Esophagus muscularis mucosa (tissue), 4 donors: ENCODE measurements at regions of chr12 and their contacts with region 1.

Region 1: GRCh38 chr12:12376646-12377448 is 20.0 kb downstream of the BORCS5 start:
- DNase-seq: no peak
- H3K4me3 ChIP-seq: no peak overlapping the region
- H3K27ac ChIP-seq: no peak overlapping the region
- H3K4me1 ChIP-seq: peaks cover 0 to 12% (median 10%) of the 10 kb centered on the region in 4 donors
- H3K27me3 ChIP-seq: no peaks in the 10 kb centered on the region
- CTCF ChIP-seq: peak; percentile 70 to 75 (median 73)
- EP300 ChIP-seq: no peak
- POLR2A ChIP-seq: no peak

Region 2: DNA sequence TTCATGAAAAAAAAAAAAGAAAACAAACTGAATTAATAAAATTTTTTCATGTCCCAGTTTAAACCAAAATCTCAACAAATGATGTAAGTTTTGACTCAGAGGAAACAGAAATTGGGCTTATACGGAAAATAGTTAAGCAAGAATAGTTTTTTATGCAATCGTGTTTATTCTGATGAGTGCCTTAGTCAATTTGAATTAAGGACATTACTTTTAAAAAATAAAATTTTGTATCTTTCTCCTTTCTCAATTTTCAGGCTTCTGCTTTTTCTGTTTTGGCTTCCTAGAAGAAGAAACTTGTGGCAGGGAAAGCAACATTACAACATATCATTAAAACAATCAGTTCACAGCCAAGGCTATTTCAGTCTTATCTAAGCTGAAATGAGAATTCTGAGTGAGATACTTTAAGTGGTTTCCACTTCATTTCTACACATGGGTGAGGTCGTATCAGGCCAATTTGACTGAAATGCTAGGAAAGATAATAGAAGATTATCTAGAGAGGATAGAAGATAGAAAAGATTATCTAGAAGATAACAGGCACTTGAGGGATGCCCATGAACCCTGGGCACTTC is 253.7 kb before region 1 on chr12:
- intact Hi-C with region 1: no loop called
- DNase-seq: no peak
- H3K4me3 ChIP-seq: no peak overlapping the region
- H3K27ac ChIP-seq: peak overlapping the region in 2 of 4 donors; percentile 12 to 28
- H3K4me1 ChIP-seq: no peaks in the 10 kb centered on the region
- H3K27me3 ChIP-seq: no peaks in the 10 kb centered on the region
- CTCF ChIP-seq: no peak
- EP300 ChIP-seq: no peak
- POLR2A ChIP-seq: no peak

Region 3: GRCh38 chr12:12387501-12387900 is 10.7 kb after region 1 on chr12:
- intact Hi-C with region 1: loop called (anchors 1 kb)
- DNase-seq: peak; percentile 83
- H3K4me3 ChIP-seq: no peak overlapping the region
- H3K27ac ChIP-seq: no peak overlapping the region
- H3K4me1 ChIP-seq: peaks cover 0 to 9% (median 4%) of the 10 kb centered on the region in 4 donors
- H3K27me3 ChIP-seq: no peaks in the 10 kb centered on the region
- CTCF ChIP-seq: no peak
- EP300 ChIP-seq: no peak
- POLR2A ChIP-seq: no peak

Region 4: GRCh38 chr12:12449467-12450025 is 72.7 kb after region 1 on chr12:
- intact Hi-C with region 1: no loop called
- DNase-seq: no peak
- H3K4me3 ChIP-seq: no peak overlapping the region
- H3K27ac ChIP-seq: no peak overlapping the region
- H3K4me1 ChIP-seq: peaks cover 0 to 7% (median 4%) of the 10 kb centered on the region in 4 donors
- H3K27me3 ChIP-seq: no peaks in the 10 kb centered on the region
- CTCF ChIP-seq: no peak
- EP300 ChIP-seq: no peak
- POLR2A ChIP-seq: no peak

Region 5: DNA sequence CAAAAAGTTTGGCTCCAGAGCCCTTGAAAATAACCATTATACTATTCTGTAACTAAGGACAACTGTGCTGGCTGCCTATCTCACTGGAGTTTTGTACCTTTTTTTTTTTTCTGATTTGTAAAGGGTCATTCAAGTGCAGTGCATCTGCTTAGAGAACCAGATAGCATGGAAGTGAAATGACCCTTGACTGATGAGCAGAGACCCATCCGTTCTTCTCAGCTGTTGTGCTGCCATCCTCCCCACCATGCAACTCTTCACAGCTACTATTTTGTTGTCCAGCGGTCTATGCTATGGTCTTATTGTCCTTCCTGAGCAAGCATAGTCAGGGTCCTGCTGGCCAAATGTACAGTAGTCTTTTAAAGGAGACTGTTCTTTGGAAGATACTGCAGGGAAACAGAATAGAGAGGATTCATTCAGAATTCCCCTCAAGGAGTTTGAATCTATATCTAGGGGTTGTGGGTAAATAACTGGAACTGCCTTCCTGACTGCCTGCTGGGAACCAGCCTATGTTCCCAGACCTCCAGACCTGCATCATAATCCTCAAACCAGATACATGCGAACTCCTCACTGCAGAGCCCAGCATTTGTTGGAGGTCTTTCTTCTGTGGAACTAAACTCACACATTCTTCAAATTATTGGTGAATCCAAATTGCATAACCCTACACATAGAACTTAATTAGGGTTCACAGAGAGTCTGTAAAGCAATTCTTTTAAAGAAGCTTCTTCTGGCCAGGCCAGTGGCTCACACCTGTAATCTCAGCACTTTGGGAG is 278.0 kb after region 1 on chr12:
- intact Hi-C with region 1: loop called (anchors 5 kb)
- DNase-seq: no peak
- H3K4me3 ChIP-seq: no peak overlapping the region
- H3K27ac ChIP-seq: no peak overlapping the region
- H3K4me1 ChIP-seq: peaks cover 0 to 5% (median 4%) of the 10 kb centered on the region in 4 donors
- H3K27me3 ChIP-seq: no peaks in the 10 kb centered on the region
- CTCF ChIP-seq: no peak
- EP300 ChIP-seq: no peak
- POLR2A ChIP-seq: no peak

Region 6: GRCh38 chr12:12704593-12705230 is 327.9 kb after region 1 on chr12:
- intact Hi-C with region 1: loop called (anchors 2 kb)
- DNase-seq: no peak
- H3K4me3 ChIP-seq: no peak overlapping the region
- H3K27ac ChIP-seq: no peak overlapping the region
- H3K4me1 ChIP-seq: peaks cover 0 to 12% (median 8%) of the 10 kb centered on the region in 4 donors
- H3K27me3 ChIP-seq: no peaks in the 10 kb centered on the region
- CTCF ChIP-seq: peak; percentile 85 to 99 (median 91)
- EP300 ChIP-seq: no peak
- POLR2A ChIP-seq: no peak